ENCODE measurements at regions of chr6 and their contacts with region 1.

Region 1: DNA sequence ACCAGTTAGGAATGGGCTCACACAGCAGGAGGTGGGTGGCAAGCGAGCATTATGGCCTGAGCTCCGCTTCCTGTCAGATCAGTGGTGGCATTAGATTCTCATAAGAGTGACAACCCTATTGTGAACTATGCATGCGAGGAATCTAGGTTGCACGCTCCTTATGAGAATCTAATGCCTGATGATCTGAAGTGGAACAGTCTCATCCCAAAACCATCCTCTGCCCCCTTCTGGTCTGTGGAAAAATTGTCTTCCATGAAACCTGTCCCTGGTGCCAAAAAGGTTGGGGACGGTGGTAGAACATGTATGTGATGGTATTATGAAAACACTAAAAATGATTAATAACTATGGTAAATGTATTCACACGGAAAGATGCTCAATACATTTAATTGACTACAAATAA is 99.7 kb upstream of the HIVEP1 start:
- DNase-seq: peak in 1 of 4 experiments; percentile 58
- ATAC-seq: peak; percentile 50
- H3K4me3 ChIP-seq: no peak overlapping the region
- H3K27ac ChIP-seq: no peak overlapping the region
- H3K4me1 ChIP-seq: peaks cover 0 to 5% of the 10 kb centered on the region in 2 experiments; a peak in 2 of 5 replicates
- H3K27me3 ChIP-seq: no peaks in the 10 kb centered on the region
- CTCF ChIP-seq: peak in 2 of 3 experiments; percentile 26 to 30; a peak in 3 of 6 replicates
- EP300 ChIP-seq: no peak
- POLR2A ChIP-seq: no peak
- RAD21 ChIP-seq: peak in 1 of 2 experiments; percentile 59; a peak in 2 of 4 replicates

Region 2: GRCh38 chr6:11552442-11552841 is 360.0 kb before region 1 on chr6:
- CTCF ChIA-PET with region 1: no interaction called
- POLR2A ChIA-PET with region 1: no interaction called
- in situ Hi-C with region 1: no loop called
- intact Hi-C with region 1: no loop called
- DNase-seq: no peak
- ATAC-seq: no peak
- H3K4me3 ChIP-seq: no peak overlapping the region
- H3K27ac ChIP-seq: no peak overlapping the region
- H3K4me1 ChIP-seq: no peaks in the 10 kb centered on the region
- H3K27me3 ChIP-seq: peaks cover 0 to 10% of the 10 kb centered on the region in 2 experiments; a peak in 1 of 5 replicates
- CTCF ChIP-seq: no peak
- EP300 ChIP-seq: no peak
- POLR2A ChIP-seq: no peak
- RAD21 ChIP-seq: no peak

Region 3: DNA sequence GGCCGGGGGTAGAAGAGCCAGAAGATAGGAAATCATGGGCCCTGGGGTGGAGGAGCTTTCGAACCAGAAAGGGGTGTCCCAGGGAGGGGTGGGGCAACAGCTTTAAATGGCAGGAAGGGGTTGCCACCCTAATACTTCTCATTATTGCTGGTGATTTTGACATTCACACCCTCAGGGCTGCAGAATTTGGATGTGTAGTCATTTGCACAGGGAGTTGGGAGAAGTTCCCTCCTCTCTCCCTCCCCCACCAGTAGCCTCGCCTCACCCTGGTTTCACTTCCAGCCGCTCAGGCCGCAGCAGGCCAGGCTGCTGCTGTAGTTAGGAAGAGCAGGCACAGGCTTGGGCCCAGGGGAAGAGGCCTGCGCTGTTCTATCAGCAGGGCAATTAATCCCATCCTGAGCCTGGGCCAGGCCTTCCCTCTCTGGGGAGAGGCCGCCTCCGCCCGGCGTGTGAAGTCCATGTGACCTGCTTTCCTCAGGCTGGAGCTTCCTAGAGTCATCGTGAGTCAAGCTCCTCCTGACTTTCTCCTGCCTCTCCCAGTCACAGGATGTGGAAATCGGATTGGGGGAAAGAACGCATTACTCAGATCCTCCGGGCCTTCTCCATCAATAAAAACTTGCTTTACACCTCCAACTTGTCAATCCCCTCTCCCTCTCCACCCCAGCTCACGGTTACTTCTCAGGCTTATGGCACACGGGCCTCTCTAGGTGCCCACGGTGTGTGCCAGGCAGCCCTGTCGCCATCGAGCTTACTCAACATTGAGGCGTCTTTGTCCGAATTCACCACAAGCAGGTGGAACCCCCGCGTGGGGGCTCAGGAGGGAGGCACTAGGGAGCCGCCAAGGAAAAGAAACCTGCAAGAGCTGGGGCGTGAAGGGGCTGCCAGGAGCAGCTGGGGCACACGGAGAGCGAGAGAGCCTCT is 141.6 kb before region 1 on chr6:
- CTCF ChIA-PET with region 1: no interaction called
- POLR2A ChIA-PET with region 1: interaction called, 3 read pairs
- in situ Hi-C with region 1: no loop called
- intact Hi-C with region 1: loop called (anchors 5 kb)
- DNase-seq: peak in 2 of 4 experiments; percentile 44 to 48
- ATAC-seq: peak; percentile 60
- H3K4me3 ChIP-seq: no peak overlapping the region
- H3K27ac ChIP-seq: no peak overlapping the region
- H3K4me1 ChIP-seq: peaks cover 24 to 49% of the 10 kb centered on the region in 2 experiments
- H3K27me3 ChIP-seq: no peaks in the 10 kb centered on the region
- CTCF ChIP-seq: no peak
- EP300 ChIP-seq: no peak
- POLR2A ChIP-seq: no peak
- RAD21 ChIP-seq: no peak

Region 4: GRCh38 chr6:12051861-12052368 is 139.5 kb after region 1 on chr6:
- CTCF ChIA-PET with region 1: no interaction called
- POLR2A ChIA-PET with region 1: no interaction called
- in situ Hi-C with region 1: no loop called
- intact Hi-C with region 1: no loop called
- DNase-seq: no peak
- ATAC-seq: peak; percentile 33; the same call in 2 of the 3 replicates
- H3K4me3 ChIP-seq: no peak overlapping the region
- H3K27ac ChIP-seq: no peak overlapping the region
- H3K4me1 ChIP-seq: no peaks in the 10 kb centered on the region; a peak in 1 of 5 replicates
- H3K27me3 ChIP-seq: no peaks in the 10 kb centered on the region
- CTCF ChIP-seq: no peak
- EP300 ChIP-seq: no peak
- POLR2A ChIP-seq: no peak
- RAD21 ChIP-seq: no peak

Measured in K562 (cell line).